ENCODE measurements at regions of chr15 and their contacts with region 1.

Region 1: GRCh38 chr15:49235446-49236124 is 65.5 kb downstream of the GALK2 start:
- DNase-seq: peak; percentile 62 to 65
- H3K4me3 ChIP-seq: no peak overlapping the region
- H3K4me1 ChIP-seq: peaks cover 17% of the 10 kb centered on the region
- H3K27me3 ChIP-seq: no peaks in the 10 kb centered on the region

Region 2: DNA sequence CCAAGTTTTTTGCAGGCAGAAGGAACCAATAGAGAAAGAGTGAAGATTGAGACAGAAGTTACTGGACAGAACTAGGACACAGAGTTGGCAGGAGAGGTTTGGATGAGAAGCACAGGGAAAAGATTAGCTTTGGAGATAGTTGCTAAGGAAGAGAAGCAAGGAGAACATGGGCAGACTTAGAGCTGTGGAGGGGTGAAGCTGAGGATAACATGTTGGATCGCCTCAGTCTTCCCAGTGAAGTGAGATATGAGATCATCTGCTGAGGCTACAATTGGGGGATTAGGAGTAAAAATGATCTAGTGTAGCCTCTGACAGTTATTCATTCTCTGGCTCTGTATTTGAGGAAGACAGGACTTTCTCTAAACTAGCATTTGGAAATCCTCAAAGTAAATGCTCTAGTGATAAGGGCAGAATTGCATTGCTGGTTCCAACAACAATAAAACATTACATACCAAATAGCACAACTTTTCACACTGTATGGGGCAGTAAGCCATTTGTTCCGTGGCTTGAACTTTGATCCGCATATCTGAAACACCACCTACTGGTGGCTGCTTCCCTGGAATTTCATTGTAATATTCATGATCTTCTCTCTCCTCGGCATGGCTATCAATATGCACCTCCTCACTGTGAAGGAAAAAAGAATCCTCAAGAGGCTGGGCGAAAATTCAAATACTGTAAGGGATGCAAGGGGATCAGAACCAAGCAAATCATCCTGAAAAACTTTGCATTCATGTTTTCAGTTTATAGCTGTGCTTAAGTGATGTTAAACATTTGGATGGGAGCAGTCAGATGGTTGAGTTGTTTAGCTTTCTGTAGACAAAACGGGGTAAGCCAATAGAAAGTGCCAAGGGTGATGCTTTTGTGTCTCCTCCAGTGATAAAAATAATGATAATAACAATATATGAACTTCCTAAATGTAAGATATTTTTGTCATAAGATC is 379.8 kb before region 1 on chr15:
- in situ Hi-C with region 1: no loop called
- DNase-seq: peak; percentile 25 to 56
- H3K4me3 ChIP-seq: no peak overlapping the region
- H3K4me1 ChIP-seq: peaks cover 6% of the 10 kb centered on the region
- H3K27me3 ChIP-seq: no peaks in the 10 kb centered on the region

Region 3: DNA sequence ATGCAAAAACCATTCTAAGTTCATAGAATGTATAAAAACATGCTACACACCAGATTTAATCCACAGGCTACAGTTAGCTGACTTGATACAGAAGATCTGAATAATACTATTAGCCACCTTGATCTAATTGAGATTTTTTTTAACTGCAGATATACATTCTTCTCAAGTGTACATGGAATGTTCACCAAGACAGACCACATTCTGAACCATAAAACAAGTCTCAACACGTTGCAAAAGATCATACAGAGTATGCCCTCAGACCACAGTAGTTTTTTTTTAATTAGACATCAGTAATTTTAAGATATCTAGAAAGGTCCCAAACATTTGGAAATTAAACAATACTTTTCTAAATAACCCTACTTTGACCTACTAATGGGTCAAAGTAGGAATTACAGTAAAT is 270.8 kb after region 1 on chr15:
- in situ Hi-C with region 1: no loop called
- DNase-seq: no peak
- H3K4me3 ChIP-seq: no peak overlapping the region
- H3K4me1 ChIP-seq: no peaks in the 10 kb centered on the region
- H3K27me3 ChIP-seq: no peaks in the 10 kb centered on the region

Region 4: GRCh38 chr15:50145451-50145872 is 909.9 kb after region 1 on chr15:
- in situ Hi-C with region 1: loop called (anchors 10 kb)
- DNase-seq: peak; percentile 33 to 62
- H3K4me3 ChIP-seq: no peak overlapping the region
- H3K4me1 ChIP-seq: peaks cover 6% of the 10 kb centered on the region
- H3K27me3 ChIP-seq: no peaks in the 10 kb centered on the region